Right ventricle myocardium superior (tissue), 1 donor: ENCODE measurements at regions of chr1 and their contacts with region 1.

Region 1: DNA sequence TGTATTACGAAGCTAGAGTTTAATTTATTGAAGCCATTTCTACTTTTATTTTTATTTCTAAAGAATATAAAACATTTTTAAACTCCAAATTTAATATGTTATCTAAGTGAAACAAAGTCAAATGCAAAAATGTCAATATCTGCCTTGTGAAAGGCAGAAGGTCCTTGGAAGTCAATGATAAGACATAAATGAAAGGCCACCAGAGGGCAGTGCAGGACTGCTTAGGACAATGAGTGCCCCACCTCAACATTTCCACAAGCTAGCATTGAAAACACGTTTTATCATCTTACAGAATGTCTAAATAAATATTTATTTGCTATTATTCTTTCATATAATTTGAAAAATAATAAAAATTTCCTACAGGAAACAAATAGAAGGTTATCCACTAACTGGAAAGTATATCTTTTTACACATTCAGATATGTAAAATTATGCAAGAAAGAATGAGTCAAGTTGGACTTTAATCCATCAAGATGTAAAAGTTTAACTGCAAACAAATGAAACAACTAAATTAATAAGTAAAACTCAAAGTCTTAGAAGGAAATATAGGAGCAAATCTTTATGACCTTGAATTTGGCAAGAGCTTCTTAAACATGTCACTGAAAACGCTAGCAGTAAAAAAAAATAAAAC is 140.1 kb upstream of the FMN2 start:
- DNase-seq: no peak
- ATAC-seq: no peak

Region 2: DNA sequence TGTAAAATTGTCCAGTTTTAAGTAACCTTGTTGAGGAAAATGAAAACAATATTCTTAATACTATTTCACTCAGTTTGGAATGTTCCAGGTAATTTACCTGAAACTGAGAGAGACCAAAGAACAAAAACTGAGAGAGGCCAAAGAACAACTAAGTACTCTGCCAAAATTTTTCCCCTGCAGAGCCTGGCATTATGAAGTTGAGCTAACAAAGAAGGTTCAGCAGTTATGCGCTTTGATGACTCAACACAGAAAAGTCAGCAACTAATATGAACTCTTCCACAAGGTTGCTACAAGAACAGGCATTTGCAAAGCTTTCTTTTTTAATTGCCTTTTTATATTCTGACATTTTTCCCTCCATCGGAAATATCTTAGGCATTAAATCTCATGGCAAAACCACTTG is 294.3 kb before region 1 on chr1:
- intact Hi-C with region 1: no loop called
- DNase-seq: no peak
- ATAC-seq: no peak

Region 3: GRCh38 chr1:239879321-239880170 is 72.1 kb before region 1 on chr1:
- intact Hi-C with region 1: no loop called
- DNase-seq: no peak
- ATAC-seq: peak; percentile 49

Region 4: DNA sequence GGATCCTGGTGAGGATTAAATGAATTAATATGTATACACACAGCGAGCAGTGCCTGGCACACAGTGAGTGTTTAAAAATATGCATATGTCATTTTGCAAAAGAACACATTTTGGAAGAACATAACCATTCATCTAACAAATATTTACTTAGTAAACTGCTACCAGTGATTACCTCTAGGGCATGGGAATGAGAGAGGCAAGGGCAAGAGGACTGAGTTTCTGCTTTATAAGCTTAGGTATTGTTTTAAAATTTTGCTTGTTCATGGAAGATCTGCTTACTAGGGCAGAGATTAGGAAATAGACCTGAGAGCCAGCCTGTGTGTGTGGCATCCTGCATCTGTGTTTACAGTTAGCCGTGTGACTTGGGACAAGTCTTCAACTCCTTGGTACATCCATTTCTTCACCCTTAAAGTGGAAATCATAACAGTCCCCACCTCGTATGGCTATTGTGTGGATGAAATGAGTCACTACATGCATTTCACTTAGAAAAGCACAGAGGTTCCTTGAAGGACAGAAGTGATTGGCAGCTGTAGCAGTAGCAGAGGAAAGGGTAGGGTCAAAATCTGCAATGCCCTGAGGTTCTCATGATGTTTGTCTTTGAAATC is 58.4 kb before region 1 on chr1:
- intact Hi-C with region 1: no loop called
- DNase-seq: no peak
- ATAC-seq: no peak

Region 5: GRCh38 chr1:239987103-239987745 is 35.6 kb after region 1 on chr1:
- intact Hi-C with region 1: loop called (anchors 5 kb)
- DNase-seq: no peak
- ATAC-seq: no peak